ACHN (cell line): ENCODE measurements at regions of chr5 and their contacts with region 1.

Region 1: DNA sequence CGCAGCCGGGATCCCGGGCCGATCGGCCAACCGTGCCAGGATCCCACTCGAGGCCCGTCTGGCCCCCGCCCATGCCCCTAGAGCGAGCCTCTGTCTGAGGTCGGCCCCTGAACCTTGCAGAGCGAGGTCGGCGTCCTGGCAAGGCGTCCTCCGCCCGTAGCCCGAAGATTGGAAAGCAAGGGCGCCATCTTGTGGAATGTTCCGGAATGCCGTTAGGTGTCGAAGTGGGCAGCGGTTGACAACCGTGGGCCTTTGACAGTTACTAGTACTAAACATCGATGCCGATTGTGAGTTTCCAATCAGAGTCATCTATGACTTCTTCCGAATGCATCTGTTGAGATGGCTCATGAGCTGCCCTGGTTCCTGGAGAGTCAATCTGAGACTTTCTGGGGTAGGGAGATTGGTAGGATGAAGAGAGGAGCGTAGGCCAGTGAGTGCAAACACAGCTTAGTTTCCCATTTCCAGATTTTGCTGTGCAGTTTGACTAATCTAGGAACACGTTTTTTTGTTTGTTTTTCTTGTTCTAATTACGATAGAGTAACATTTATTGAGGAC is 923 bp upstream of the PLK2 start:
- DNase-seq: peak; percentile 90

Region 2: DNA sequence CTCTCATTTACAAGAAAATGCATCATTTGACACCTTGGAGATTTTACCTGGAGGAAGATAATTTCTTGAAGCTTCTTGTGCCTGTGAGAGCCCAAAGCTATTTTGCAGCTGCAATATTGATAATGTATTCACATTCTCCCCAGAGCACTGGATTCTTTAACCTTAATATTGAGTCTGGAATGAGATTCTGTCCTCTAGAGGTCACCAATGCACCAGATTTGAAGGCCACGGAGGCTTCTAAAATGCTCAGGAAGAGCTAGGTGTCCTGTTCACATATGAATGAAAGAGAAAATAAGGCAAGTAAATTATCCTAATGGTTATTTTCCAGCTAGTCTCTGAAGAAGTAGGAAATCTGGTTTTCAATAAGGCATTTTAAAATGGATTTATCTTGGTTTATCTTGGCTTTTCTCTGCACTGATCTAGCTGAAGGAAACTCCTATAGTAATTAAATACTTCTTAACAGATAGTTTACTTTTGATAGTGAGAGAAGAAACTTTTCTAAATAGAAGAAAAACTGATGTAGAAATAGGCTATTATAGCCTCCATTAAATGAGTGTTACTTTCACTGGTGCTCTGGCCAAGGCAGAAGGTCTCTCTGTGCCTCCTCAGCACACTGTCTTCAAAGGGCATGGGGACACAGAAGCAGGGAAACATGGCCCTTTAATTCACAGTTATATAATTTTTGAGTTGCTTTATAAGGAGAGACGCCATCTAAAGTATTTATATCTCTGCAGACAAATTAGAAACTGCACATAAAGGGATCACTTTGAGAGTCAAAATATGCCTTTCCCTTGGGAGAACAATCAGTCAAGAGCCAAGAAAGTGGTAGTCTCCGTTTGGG is 681.2 kb before region 1 on chr5:
- in situ Hi-C with region 1: loop called (anchors 25 kb)
- DNase-seq: peak; percentile 82

Region 3: GRCh38 chr5:58046371-58046770 is 414.4 kb before region 1 on chr5:
- in situ Hi-C with region 1: no loop called
- DNase-seq: no peak

Region 4: GRCh38 chr5:58827463-58827862 is 366.7 kb after region 1 on chr5:
- in situ Hi-C with region 1: no loop called
- DNase-seq: no peak